Heart left ventricle (tissue), 16 donors: ENCODE measurements at regions of chr12 and their contacts with region 1.

Region 1: DNA sequence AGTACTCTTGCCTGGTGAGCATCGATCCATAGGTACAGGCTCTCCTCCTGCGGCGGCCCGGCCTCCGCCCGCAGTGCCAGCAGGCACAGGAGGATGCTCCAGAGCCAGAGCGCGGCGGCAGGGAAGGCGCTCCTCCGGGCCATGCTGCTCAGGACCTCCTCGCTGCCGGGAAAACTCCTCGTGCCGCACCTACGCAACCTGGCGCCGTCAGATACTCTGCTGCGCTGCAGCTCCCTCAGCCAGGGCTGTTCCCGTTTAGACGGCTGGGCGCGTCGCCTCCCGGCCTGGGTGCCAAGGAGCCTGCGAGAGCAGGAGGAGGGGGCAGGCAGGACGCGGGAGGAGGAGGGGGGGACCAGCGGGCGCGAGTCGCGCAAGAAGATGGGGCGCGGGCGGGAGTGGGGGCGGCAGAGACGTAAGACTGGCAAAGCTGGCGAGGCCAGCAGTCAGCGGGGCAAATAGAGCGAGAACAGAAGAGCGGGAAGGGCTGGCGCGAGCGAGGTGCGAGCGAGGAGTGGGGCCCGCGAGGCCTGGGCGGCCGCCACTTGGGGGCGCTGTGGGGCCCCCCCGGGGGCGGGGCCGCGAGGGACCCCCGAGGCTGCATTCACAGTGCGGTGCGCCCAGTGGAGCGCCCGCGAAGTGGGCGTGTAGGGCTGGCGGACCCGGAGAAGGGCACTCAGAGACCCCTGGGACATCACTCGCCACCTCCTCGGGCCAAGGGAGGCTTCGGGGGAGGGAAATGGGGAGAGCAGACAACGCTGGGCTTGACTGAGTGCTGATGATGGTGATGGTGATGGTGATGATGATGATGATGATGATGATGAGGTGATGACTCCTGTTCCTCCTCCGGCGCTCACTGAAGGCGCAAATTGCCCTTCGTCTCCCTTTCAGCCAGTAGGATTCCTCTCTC is at the start of gene WIF1:
- DNase-seq: peak in 3 of 5 donors; percentile 19 to 71 (median 24)
- ATAC-seq: peak in 3 of 4 donors; percentile 11 to 42 (median 18)
- H3K4me3 ChIP-seq: peak within 1 kb of the TSS in 11 of 12 donors; percentile 10 to 38 (median 28)
- H3K27ac ChIP-seq: no peak within 1 kb of the TSS
- H3K4me1 ChIP-seq: peaks cover 0 to 13% (median 5%) of the 10 kb centered on the region in 12 donors
- H3K27me3 ChIP-seq: peaks cover 21 to 98% (median 59%) of the 10 kb centered on the region in 9 donors
- CTCF ChIP-seq: peak in 10 of 12 donors; percentile 6 to 40 (median 26)
- POLR2A ChIP-seq: no peak
- total RNA-seq, gene WIF1: not detected

Region 2: GRCh38 chr12:64796208-64796845 is 325.0 kb before region 1 on chr12:
- intact Hi-C with region 1: loop called in 6 of 10 experiments (anchors 5 to 10 kb)
- DNase-seq: peak in 3 of 5 donors; percentile 29 to 49 (median 43)
- ATAC-seq: peak; percentile 15 to 78 (median 70)
- H3K4me3 ChIP-seq: no peak overlapping the region
- H3K27ac ChIP-seq: no peak overlapping the region
- H3K4me1 ChIP-seq: peaks cover 0 to 10% (median 0%) of the 10 kb centered on the region in 12 donors
- H3K27me3 ChIP-seq: no peaks in the 10 kb centered on the region
- CTCF ChIP-seq: peak; percentile 75 to 89 (median 83)
- POLR2A ChIP-seq: no peak

Region 3: GRCh38 chr12:64801381-64801780 is 319.9 kb before region 1 on chr12:
- intact Hi-C with region 1: loop called in 6 of 10 experiments (anchors 5 to 10 kb)
- DNase-seq: no peak
- ATAC-seq: no peak
- H3K4me3 ChIP-seq: no peak overlapping the region
- H3K27ac ChIP-seq: no peak overlapping the region
- H3K4me1 ChIP-seq: peaks cover 0 to 12% (median 0%) of the 10 kb centered on the region in 12 donors
- H3K27me3 ChIP-seq: peaks cover 0 to 6% (median 0%) of the 10 kb centered on the region in 9 donors
- CTCF ChIP-seq: no peak
- POLR2A ChIP-seq: no peak

Region 4: DNA sequence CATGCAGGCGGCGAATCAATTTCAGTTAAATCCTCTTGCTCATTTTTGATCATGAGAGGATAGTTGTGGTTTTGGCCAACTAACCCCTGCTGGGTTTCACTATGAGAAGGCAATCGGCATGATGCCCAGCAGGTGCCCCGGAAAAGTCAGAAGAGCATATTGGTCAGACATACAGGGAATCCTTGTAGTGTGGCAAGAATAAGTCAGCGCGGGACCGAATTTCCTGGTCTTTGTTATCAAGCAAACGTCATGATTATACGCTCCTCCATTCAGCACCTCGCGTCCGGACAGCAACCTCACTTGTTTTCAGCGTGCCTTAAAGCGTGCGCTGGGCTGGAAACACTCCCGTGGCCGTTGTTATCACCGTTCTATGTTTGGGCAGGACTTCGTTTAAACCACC is 295.1 kb before region 1 on chr12:
- intact Hi-C with region 1: no loop called
- DNase-seq: peak; percentile 39 to 78 (median 56)
- ATAC-seq: peak; percentile 55 to 76 (median 74)
- H3K4me3 ChIP-seq: no peak overlapping the region
- H3K27ac ChIP-seq: no peak overlapping the region
- H3K4me1 ChIP-seq: peaks cover 0 to 28% (median 21%) of the 10 kb centered on the region in 12 donors
- H3K27me3 ChIP-seq: peaks cover 2 to 68% (median 43%) of the 10 kb centered on the region in 9 donors
- CTCF ChIP-seq: no peak
- POLR2A ChIP-seq: no peak

Region 5: DNA sequence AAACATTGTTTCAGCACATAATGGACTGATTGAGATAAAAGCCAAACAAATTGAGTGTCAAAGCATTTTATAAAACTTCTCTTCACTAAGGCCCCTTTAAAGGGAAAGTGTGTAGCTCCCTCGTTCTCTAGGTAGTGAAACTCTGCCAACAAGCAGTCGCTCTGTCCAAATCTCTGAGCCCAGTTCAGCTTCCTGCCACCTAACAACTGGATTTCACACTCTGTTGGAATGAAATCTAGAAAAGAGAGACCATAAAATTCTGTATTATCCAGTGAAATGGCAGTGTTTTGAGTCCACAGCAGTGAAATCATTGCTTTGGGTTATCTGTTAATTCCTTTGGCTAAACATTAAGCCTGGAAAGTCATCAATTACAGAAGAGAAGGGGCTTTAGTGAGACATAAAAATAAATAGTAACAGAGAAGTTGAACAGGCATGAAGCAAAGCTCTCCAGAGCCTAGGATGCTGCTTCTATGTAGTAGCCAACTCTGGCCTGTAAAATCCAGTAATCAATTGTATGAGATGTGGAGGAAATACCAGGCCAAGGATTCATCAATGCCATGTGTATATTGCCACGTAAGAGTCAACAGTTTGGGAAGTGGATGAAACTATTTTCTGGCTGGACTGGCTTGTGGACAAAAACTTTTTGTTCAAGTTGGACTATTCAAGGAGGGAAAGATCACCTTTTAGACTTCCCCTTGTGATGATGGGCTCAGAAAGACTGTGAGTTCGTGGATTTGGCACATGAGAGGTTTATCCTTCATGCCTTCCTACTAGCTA is 122.7 kb before region 1 on chr12:
- intact Hi-C with region 1: no loop called
- DNase-seq: no peak
- ATAC-seq: no peak
- H3K4me3 ChIP-seq: no peak overlapping the region
- H3K27ac ChIP-seq: no peak overlapping the region
- H3K4me1 ChIP-seq: peaks cover 0 to 5% (median 0%) of the 10 kb centered on the region in 12 donors
- H3K27me3 ChIP-seq: peaks cover 0 to 15% (median 0%) of the 10 kb centered on the region in 9 donors
- CTCF ChIP-seq: no peak
- POLR2A ChIP-seq: no peak

Region 6: DNA sequence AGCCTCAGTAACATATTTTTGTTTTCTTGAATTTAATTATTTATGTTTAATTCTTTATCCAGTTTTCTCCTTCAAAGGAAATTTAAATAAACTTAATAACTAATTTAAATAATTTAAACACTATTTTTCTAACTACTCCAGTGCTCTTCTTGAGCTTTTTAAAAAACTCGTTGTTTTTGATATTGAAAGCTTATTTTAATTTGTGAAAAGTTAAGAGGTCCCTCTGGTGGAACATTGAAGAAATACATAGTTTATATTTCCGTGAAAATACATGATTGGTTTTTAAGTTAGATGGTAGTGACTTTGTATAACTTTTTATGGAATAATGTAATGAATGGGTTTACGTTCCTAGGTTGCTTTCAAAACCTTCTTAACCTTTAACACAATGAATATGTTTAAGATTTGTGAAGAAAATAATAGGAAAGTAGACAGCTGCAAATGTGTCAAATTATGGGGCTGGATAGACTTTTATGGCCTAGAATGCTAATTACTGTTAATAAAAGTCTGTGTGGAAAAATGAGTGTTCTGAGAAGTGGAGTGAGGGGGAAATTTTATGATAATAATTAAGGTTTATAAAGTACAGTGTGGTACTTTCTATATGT is 111.3 kb after region 1 on chr12:
- intact Hi-C with region 1: loop called in 1 of 10 experiments (anchors 10 kb)
- DNase-seq: no peak
- ATAC-seq: no peak
- H3K4me3 ChIP-seq: no peak overlapping the region
- H3K27ac ChIP-seq: no peak overlapping the region
- H3K4me1 ChIP-seq: peaks cover 0 to 5% (median 0%) of the 10 kb centered on the region in 12 donors
- H3K27me3 ChIP-seq: no peaks in the 10 kb centered on the region
- CTCF ChIP-seq: peak; percentile 33 to 71 (median 55)
- POLR2A ChIP-seq: no peak